ENCODE measurements at regions of chr4 and their contacts with region 1.

Region 1: DNA sequence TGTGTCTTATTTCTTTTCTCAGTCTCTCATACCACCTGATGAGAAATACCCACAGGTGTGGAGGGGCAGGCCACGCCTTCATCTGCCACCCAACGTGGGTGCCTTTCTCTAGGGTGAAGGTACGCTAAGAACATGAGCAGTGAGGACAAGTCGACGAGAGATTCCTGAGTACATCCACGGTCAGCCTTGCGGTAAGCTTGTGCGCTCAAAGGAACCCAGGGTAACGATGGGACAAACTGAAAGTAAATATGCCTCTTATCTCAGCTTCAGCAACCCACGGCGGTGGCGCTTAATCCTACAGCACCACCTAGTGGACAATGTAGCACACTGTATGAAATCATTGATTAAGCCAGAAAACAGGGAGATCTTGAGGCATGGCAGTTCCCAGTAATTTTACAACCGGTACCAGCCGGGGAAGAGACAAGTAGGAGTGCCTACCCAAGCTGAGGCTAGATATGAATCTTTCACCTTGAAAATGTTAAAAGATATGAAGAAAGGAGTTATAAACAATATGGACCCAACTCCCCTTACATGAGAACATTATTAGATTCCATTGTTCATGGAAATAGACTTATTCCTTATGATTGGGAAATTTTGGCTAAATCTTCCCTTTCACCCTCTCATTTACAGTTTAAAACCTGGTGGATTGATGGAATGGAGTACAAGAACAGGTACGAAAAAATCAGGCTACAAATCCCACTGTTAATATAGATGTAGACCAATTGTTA is 63.0 kb downstream of the ZNF732 start:
- DNase-seq: peak; percentile 73 to 78 (median 75)
- H3K4me3 ChIP-seq: peak overlapping the region; percentile 63 to 75
- H3K4me3 Mint-ChIP-seq: peak overlapping the region; percentile 87 to 93 (median 89)
- H3K27ac ChIP-seq: peak overlapping the region; percentile 39
- H3K27ac Mint-ChIP-seq: peak overlapping the region; percentile 75 to 95 (median 90)
- H3K4me1 ChIP-seq: peaks cover 6% of the 10 kb centered on the region
- H3K4me1 Mint-ChIP-seq: peaks cover 8 to 11% (median 10%) of the 10 kb centered on the region in 4 donors
- H3K27me3 ChIP-seq: no peaks in the 10 kb centered on the region
- H3K27me3 Mint-ChIP-seq: no peaks in the 10 kb centered on the region

Region 2: GRCh38 chr4:473570-474457 is 231.5 kb after region 1 on chr4:
- CTCF ChIA-PET with region 1: no interaction called
- POLR2A ChIA-PET with region 1: no interaction called
- intact Hi-C with region 1: loop called (anchors 10 kb)
- DNase-seq: peak; percentile 96 to 98 (median 96)
- H3K4me3 ChIP-seq: peak overlapping the region; percentile 42 to 51
- H3K4me3 Mint-ChIP-seq: peak overlapping the region; percentile 96 to 100 (median 98)
- H3K27ac ChIP-seq: peak overlapping the region; percentile 86
- H3K27ac Mint-ChIP-seq: peak overlapping the region; percentile 99 to 100 (median 99)
- H3K4me1 ChIP-seq: peaks cover 11% of the 10 kb centered on the region
- H3K4me1 Mint-ChIP-seq: peaks cover 17 to 41% (median 29%) of the 10 kb centered on the region in 4 donors
- H3K27me3 ChIP-seq: no peaks in the 10 kb centered on the region
- H3K27me3 Mint-ChIP-seq: no peaks in the 10 kb centered on the region

Region 3: GRCh38 chr4:674172-675035 is 432.1 kb after region 1 on chr4 and contains the starts of genes ATP5ME and MYL5:
- CTCF ChIA-PET with region 1: interaction called, 3 read pairs
- POLR2A ChIA-PET with region 1: interaction called, 8 read pairs
- intact Hi-C with region 1: loop called (anchors 1 kb)
- DNase-seq: peak; percentile 98 to 100 (median 98)
- H3K4me3 ChIP-seq: peak within 1 kb of the TSS; percentile 57 to 76
- H3K4me3 Mint-ChIP-seq: peak within 1 kb of the TSS; percentile 86 to 93 (median 90)
- H3K27ac ChIP-seq: peak within 1 kb of the TSS; percentile 99
- H3K27ac Mint-ChIP-seq: peak within 1 kb of the TSS; percentile 85 to 94 (median 92)
- H3K4me1 ChIP-seq: peaks cover 16% of the 10 kb centered on the region
- H3K4me1 Mint-ChIP-seq: peaks cover 2 to 18% (median 10%) of the 10 kb centered on the region in 4 donors
- H3K27me3 ChIP-seq: no peaks in the 10 kb centered on the region
- H3K27me3 Mint-ChIP-seq: no peaks in the 10 kb centered on the region
- total RNA-seq, gene ATP5ME: 137 to 152 TPM
- total RNA-seq, gene MYL5: 12.1 to 15.4 TPM

Region 4: GRCh38 chr4:931960-932712 is 689.9 kb after region 1 on chr4 and contains the starts of genes GAK and TMEM175:
- CTCF ChIA-PET with region 1: no interaction called
- POLR2A ChIA-PET with region 1: no interaction called
- intact Hi-C with region 1: loop called (anchors 5 kb)
- DNase-seq: peak; percentile 93 to 98 (median 97)
- H3K4me3 ChIP-seq: peak within 1 kb of the TSS; percentile 82 to 94
- H3K4me3 Mint-ChIP-seq: peak within 1 kb of the TSS; percentile 91 to 99 (median 95)
- H3K27ac ChIP-seq: peak within 1 kb of the TSS; percentile 99
- H3K27ac Mint-ChIP-seq: peak within 1 kb of the TSS; percentile 90 to 99 (median 97)
- H3K4me1 ChIP-seq: peaks cover 45% of the 10 kb centered on the region
- H3K4me1 Mint-ChIP-seq: peaks cover 27 to 48% (median 37%) of the 10 kb centered on the region in 4 donors
- H3K27me3 ChIP-seq: no peaks in the 10 kb centered on the region
- H3K27me3 Mint-ChIP-seq: no peaks in the 10 kb centered on the region
- total RNA-seq, gene GAK: 185 to 188 TPM
- total RNA-seq, gene TMEM175: 45.7 to 52.3 TPM

Region 5: GRCh38 chr4:1072830-1073446 is 830.7 kb after region 1 on chr4:
- CTCF ChIA-PET with region 1: no interaction called
- POLR2A ChIA-PET with region 1: no interaction called
- intact Hi-C with region 1: loop called (anchors 5 kb)
- DNase-seq: peak; percentile 37 to 56 (median 48)
- H3K4me3 ChIP-seq: no peak overlapping the region
- H3K4me3 Mint-ChIP-seq: peak overlapping the region in 1 of 8 donors; percentile 71
- H3K27ac ChIP-seq: no peak overlapping the region
- H3K27ac Mint-ChIP-seq: peak overlapping the region in 4 of 7 donors; percentile 28 to 77 (median 56)
- H3K4me1 ChIP-seq: no peaks in the 10 kb centered on the region
- H3K4me1 Mint-ChIP-seq: peaks cover 5 to 10% (median 7%) of the 10 kb centered on the region in 4 donors
- H3K27me3 ChIP-seq: no peaks in the 10 kb centered on the region
- H3K27me3 Mint-ChIP-seq: peaks cover 5 to 14% of the 10 kb centered on the region in 2 donors